Mammary epithelial cell (primary cell): ENCODE measurements at regions of chr19 and their contacts with region 1.

Region 1: DNA sequence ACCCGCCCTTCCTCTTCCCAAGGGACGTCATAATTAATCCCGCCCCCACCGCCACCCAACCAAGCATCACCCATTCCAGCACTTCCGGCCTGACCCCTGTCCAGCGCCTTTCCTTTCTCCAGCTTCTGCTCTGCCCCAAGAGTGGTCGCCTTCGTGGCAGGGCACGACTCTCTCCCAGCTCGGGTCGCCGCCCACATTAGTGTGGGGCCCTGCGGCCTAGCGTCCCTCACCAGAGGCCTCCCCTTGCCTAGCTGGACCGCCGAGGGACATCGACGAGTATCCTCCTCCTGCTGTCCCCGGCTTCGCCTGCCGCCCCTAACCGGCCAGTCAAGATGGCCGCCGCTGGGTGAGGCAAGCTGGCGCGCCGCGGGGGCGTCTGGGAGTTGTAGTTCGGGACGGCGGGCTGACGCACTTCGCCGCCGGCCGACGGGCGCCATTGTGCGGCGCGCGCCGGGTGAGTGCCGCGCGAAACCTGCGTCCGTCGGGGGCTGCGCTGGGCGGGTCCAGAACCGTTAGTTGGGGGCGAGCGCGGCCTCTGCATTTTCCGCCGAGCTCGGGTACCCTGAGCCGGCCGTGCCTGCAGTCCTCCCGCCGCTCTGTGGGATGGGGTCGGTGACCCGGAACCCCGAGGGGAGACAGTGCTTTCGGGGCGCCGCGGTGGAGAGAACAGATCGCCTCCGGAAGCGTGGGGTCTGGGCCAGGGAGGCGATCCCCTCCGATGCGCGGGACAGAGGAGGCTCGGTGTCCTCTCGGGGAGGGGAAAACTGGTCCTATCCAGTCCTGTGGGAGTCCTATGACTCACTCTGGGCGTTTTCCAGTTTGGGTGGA is at the start of gene ZNF274:
- DNase-seq: peak; percentile 90
- H3K4me3 ChIP-seq: peak within 1 kb of the TSS; percentile 81 to 97 (median 83)
- H3K27ac ChIP-seq: peak within 1 kb of the TSS; percentile 93
- H3K4me1 ChIP-seq: peaks cover 3% of the 10 kb centered on the region
- H3K27me3 ChIP-seq: no peaks in the 10 kb centered on the region
- CTCF ChIP-seq: no peak
- total RNA-seq, gene ZNF274: 15.7 to 33.8 TPM

Region 2: GRCh38 chr19:58228585-58229254 is 45.5 kb after region 1 on chr19 and contains the start of gene ZNF544:
- CTCF ChIA-PET with region 1: no interaction called
- dilution Hi-C with region 1: loop called (anchors 5 kb)
- in situ Hi-C with region 1: no loop called
- intact Hi-C with region 1: loop called (anchors 1 kb)
- DNase-seq: peak; percentile 79
- H3K4me3 ChIP-seq: peak within 1 kb of the TSS; percentile 77 to 98 (median 85)
- H3K27ac ChIP-seq: peak within 1 kb of the TSS; percentile 50
- H3K4me1 ChIP-seq: peaks cover 16% of the 10 kb centered on the region
- H3K27me3 ChIP-seq: no peaks in the 10 kb centered on the region
- CTCF ChIP-seq: peak in 1 of 2 donors; percentile 14
- total RNA-seq, gene ZNF544: 32.3 to 48.3 TPM

Region 3: GRCh38 chr19:58278157-58279041 is 95.2 kb after region 1 on chr19 and contains the start of gene ZNF8:
- CTCF ChIA-PET with region 1: no interaction called
- dilution Hi-C with region 1: no loop called
- in situ Hi-C with region 1: loop called in 1 of 2 experiments (anchors 10 kb)
- intact Hi-C with region 1: loop called (anchors 1 kb)
- DNase-seq: peak; percentile 99
- H3K4me3 ChIP-seq: peak within 1 kb of the TSS; percentile 73 to 93 (median 82)
- H3K27ac ChIP-seq: peak within 1 kb of the TSS; percentile 80
- H3K4me1 ChIP-seq: peaks cover 10% of the 10 kb centered on the region
- H3K27me3 ChIP-seq: no peaks in the 10 kb centered on the region
- CTCF ChIP-seq: peak in 1 of 2 donors; percentile 16
- total RNA-seq, gene ZNF8: 6.0 to 10.2 TPM

Region 4: GRCh38 chr19:58317476-58318072 is 134.4 kb after region 1 on chr19:
- CTCF ChIA-PET with region 1: no interaction called
- dilution Hi-C with region 1: no loop called
- in situ Hi-C with region 1: no loop called
- intact Hi-C with region 1: no loop called
- DNase-seq: no peak
- H3K4me3 ChIP-seq: no peak overlapping the region
- H3K27ac ChIP-seq: no peak overlapping the region
- H3K4me1 ChIP-seq: peaks cover 13% of the 10 kb centered on the region
- H3K27me3 ChIP-seq: no peaks in the 10 kb centered on the region
- CTCF ChIP-seq: no peak

Region 5: GRCh38 chr19:58408152-58409009 is 225.2 kb after region 1 on chr19 and contains the start of gene ZNF584:
- CTCF ChIA-PET with region 1: no interaction called
- dilution Hi-C with region 1: no loop called
- in situ Hi-C with region 1: no loop called
- intact Hi-C with region 1: loop called (anchors 5 kb)
- DNase-seq: peak; percentile 89
- H3K4me3 ChIP-seq: peak within 1 kb of the TSS; percentile 71 to 93 (median 90)
- H3K27ac ChIP-seq: peak within 1 kb of the TSS; percentile 54
- H3K4me1 ChIP-seq: peaks cover 16% of the 10 kb centered on the region
- H3K27me3 ChIP-seq: no peaks in the 10 kb centered on the region
- CTCF ChIP-seq: peak in 1 of 2 donors; percentile 19
- total RNA-seq, gene ZNF584: 16.9 to 22.8 TPM

Region 6: DNA sequence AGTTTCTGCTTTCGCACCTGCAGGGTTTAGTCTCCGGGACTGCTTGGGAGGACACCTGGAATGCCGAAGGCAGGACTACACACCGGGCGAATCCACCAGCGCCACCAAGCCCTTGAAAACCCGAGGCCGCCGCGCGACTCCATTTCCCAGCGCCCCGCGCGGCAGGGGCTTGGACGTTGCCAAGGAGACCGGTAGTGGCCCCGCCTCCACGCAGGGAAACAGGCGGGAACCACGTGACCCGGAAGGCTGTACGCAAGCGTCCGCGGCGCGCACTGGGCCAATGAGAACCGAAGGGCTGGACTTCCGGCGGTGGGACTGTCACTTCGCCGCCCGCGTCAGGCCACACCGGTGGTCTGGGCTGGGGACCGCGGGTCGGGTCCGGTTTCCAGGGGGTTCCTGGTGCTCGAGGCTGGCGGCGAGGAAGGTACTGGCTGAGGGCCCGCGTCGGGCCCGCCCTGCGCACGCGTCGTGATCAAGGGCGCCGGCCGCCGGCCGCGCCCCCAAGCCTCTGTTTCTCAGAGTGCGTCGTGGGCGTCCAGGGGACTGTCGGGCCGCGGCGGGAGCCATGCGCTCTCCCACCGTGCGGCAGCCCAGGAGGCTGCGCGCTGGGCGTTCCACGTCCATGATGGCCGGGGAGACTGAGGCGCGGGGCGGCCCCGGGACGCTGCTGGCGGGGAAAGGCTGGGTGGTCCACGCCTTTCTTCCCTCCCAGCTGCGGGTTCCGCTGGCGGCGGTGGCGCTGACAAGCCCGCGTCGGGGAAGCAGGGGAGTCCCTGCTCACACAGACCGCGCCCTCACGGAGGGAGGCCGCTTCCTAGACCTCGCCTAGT is 283.8 kb after region 1 on chr19 and contains the start of gene ZNF324:
- CTCF ChIA-PET with region 1: no interaction called
- dilution Hi-C with region 1: no loop called
- in situ Hi-C with region 1: no loop called
- intact Hi-C with region 1: loop called (anchors 2 kb)
- DNase-seq: peak; percentile 96
- H3K4me3 ChIP-seq: peak within 1 kb of the TSS; percentile 70 to 96 (median 79)
- H3K27ac ChIP-seq: peak within 1 kb of the TSS; percentile 66
- H3K4me1 ChIP-seq: peaks cover 15% of the 10 kb centered on the region
- H3K27me3 ChIP-seq: no peaks in the 10 kb centered on the region
- CTCF ChIP-seq: peak in 1 of 2 donors; percentile 20
- total RNA-seq, gene ZNF324: 12.7 to 28.7 TPM